CD4-positive, alpha-beta memory T cell (primary cell): ENCODE measurements at regions of chr2 and their contacts with region 1.

Region 1: DNA sequence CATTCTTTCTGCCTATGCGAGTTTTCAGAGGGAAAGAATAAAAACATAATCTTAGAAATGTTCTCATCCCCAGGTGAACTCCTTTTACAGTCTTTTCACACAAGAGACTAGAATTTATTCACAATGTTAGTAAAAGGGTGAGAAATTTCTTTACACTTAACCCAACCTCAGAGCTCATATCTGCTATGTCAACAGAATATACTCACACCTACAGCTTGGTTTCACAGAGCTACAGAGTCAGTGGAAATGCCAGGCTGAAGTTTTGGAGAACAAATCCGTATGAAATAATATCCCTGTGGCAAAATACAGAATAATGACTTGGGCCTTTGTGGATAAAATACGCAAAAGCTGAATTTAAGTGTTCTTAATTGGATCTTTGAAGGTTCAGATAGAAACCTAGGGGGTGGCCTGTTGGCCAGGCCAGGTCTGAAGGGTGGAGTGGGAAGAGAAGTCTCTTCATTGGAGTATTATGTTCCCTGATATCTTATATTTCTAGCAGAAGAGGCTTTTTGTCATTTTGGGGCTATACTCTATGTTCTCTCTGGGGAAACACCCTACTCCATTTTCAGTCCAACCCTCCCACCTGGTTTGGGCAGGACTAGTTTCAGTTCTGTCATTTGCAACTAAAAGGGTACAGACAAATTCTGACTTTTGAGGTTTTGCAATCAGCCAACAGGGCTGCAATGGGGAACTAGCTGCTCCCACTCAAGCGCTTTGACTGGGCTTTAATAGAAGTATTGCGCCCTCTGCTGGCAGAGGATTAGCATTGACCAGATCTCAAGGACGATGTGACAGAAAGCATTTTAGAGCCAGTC is 25.7 kb downstream of the FBXO48 start:
- DNase-seq: peak; percentile 78 to 87 (median 83)
- H3K4me3 ChIP-seq: no peak overlapping the region
- H3K4me3 Mint-ChIP-seq: peak overlapping the region in 5 of 8 donors; percentile 24 to 62 (median 37)
- H3K27ac ChIP-seq: peak overlapping the region; percentile 3
- H3K27ac Mint-ChIP-seq: peak overlapping the region; percentile 65 to 94 (median 89)
- H3K4me1 ChIP-seq: peaks cover 16% of the 10 kb centered on the region
- H3K4me1 Mint-ChIP-seq: peaks cover 8 to 24% (median 15%) of the 10 kb centered on the region in 4 donors
- H3K27me3 ChIP-seq: no peaks in the 10 kb centered on the region
- H3K27me3 Mint-ChIP-seq: no peaks in the 10 kb centered on the region

Region 2: GRCh38 chr2:68282811-68283418 is 158.5 kb before region 1 on chr2:
- CTCF ChIA-PET with region 1: interaction called, 6 read pairs
- POLR2A ChIA-PET with region 1: no interaction called
- intact Hi-C with region 1: loop called (anchors 2 kb)
- DNase-seq: peak; percentile 38 to 51 (median 46)
- H3K4me3 ChIP-seq: no peak overlapping the region
- H3K4me3 Mint-ChIP-seq: no peak overlapping the region
- H3K27ac ChIP-seq: no peak overlapping the region
- H3K27ac Mint-ChIP-seq: no peak overlapping the region
- H3K4me1 ChIP-seq: peaks cover 5% of the 10 kb centered on the region
- H3K4me1 Mint-ChIP-seq: peaks cover 0 to 8% (median 0%) of the 10 kb centered on the region in 4 donors
- H3K27me3 ChIP-seq: peaks cover 7% of the 10 kb centered on the region
- H3K27me3 Mint-ChIP-seq: peaks cover 4 to 12% of the 10 kb centered on the region in 2 donors

Region 3: DNA sequence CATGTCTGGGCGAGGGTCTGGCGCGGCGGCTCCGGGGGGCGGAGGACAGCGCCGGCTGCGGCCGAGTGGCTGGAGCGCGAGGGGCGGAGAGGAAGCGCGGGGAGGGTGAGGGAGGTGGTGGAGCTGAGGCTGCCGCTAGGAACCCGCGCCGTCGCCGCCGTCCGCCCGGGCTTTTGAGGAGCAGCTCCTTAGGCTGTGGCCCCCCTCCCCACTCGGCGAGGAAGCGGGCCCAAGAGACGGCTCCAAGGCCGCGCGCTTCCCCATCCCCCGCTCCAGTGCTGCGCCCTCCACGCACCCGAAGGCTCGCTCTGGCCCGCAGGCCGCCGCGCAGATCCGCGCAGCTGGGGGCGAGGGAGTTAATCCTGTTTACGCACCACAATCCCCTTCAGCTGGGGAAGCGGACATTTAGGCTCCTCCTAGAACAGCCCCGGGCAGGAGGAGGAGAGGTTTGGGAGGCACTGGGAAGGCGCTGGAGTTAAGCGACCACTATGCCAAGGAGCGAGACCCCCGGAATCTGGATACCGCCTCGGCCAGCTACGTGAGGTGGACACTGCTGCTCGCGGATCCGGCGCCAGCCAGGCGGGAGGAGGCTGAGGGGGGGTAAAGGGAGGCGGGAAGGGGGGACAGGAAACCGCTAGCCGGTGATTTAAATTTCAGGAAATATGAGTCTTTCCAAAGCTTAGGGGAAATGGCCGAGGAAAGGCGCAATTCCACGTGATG is 121.8 kb before region 1 on chr2 and contains the start of gene CNRIP1:
- CTCF ChIA-PET with region 1: no interaction called
- POLR2A ChIA-PET with region 1: no interaction called
- intact Hi-C with region 1: no loop called
- DNase-seq: no peak
- H3K4me3 ChIP-seq: peak within 1 kb of the TSS in 1 of 2 donors; percentile 14
- H3K4me3 Mint-ChIP-seq: peak within 1 kb of the TSS; percentile 70 to 89 (median 84)
- H3K27ac ChIP-seq: no peak within 1 kb of the TSS
- H3K27ac Mint-ChIP-seq: no peak within 1 kb of the TSS
- H3K4me1 ChIP-seq: peaks cover 14% of the 10 kb centered on the region
- H3K4me1 Mint-ChIP-seq: peaks cover 6 to 18% (median 13%) of the 10 kb centered on the region in 4 donors
- H3K27me3 ChIP-seq: peaks cover 16% of the 10 kb centered on the region
- H3K27me3 Mint-ChIP-seq: peaks cover 34 to 53% of the 10 kb centered on the region in 2 donors
- total RNA-seq, gene CNRIP1: 0.29 TPM in 1 of 2 experiments, not detected in the other

Region 4: GRCh38 chr2:68362069-68362468 is 79.3 kb before region 1 on chr2:
- CTCF ChIA-PET with region 1: interaction called, 78 read pairs
- POLR2A ChIA-PET with region 1: interaction called, 6 read pairs
- intact Hi-C with region 1: loop called (anchors 1 kb)
- DNase-seq: peak; percentile 74 to 82 (median 77)
- H3K4me3 ChIP-seq: peak overlapping the region in 1 of 2 donors; percentile 11
- H3K4me3 Mint-ChIP-seq: peak overlapping the region; percentile 63 to 88 (median 79)
- H3K27ac ChIP-seq: no peak overlapping the region
- H3K27ac Mint-ChIP-seq: peak overlapping the region; percentile 38 to 88 (median 83)
- H3K4me1 ChIP-seq: peaks cover 11% of the 10 kb centered on the region
- H3K4me1 Mint-ChIP-seq: peaks cover 5 to 42% (median 19%) of the 10 kb centered on the region in 4 donors
- H3K27me3 ChIP-seq: no peaks in the 10 kb centered on the region
- H3K27me3 Mint-ChIP-seq: no peaks in the 10 kb centered on the region

Region 5: GRCh38 chr2:68418855-68419254 is 22.5 kb before region 1 on chr2:
- CTCF ChIA-PET with region 1: interaction called, 16 read pairs
- POLR2A ChIA-PET with region 1: no interaction called
- intact Hi-C with region 1: no loop called
- DNase-seq: no peak
- H3K4me3 ChIP-seq: no peak overlapping the region
- H3K4me3 Mint-ChIP-seq: no peak overlapping the region
- H3K27ac ChIP-seq: no peak overlapping the region
- H3K27ac Mint-ChIP-seq: no peak overlapping the region
- H3K4me1 ChIP-seq: peaks cover 30% of the 10 kb centered on the region
- H3K4me1 Mint-ChIP-seq: peaks cover 3 to 42% (median 30%) of the 10 kb centered on the region in 4 donors
- H3K27me3 ChIP-seq: no peaks in the 10 kb centered on the region
- H3K27me3 Mint-ChIP-seq: no peaks in the 10 kb centered on the region

Region 6: DNA sequence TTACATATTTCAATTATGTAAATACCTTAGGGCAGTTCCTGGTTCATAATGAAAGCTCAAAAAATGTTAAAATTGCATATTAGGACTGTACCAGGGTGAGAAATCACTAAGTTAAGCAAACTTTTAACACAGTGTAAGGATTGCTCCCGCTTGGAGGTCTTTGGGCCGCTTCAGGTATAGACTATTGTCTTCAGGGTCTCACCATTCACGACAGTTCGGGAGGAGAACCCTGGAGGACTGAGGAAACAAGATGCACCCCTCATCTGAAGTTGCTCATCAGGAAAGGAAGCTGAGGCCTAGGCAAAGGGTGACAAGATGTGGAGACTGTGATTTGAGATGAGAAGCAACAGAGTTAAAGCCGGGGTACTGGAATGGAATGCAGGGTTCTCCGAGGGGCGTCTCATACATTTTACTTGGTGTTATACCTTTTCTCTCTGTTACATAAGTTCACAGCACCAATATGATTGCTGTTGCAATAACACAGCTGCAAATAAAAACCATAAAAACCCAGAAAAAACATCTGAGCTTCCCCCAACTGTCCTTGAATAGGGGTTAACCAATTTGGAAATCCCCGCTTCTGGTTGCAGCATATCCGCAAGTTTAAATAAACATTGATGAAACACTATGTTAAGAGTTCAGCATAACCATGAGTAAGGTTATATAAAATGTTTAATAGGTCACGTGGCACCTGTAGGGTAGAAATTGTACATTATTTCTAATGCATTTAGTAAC is 14.4 kb before region 1 on chr2:
- CTCF ChIA-PET with region 1: interaction called, 63 read pairs
- POLR2A ChIA-PET with region 1: interaction called, 5 read pairs
- intact Hi-C with region 1: no loop called
- DNase-seq: peak; percentile 61 to 76 (median 69)
- H3K4me3 ChIP-seq: no peak overlapping the region
- H3K4me3 Mint-ChIP-seq: peak overlapping the region in 7 of 8 donors; percentile 7 to 78 (median 61)
- H3K27ac ChIP-seq: peak overlapping the region; percentile 51
- H3K27ac Mint-ChIP-seq: peak overlapping the region; percentile 88 to 96 (median 95)
- H3K4me1 ChIP-seq: peaks cover 62% of the 10 kb centered on the region
- H3K4me1 Mint-ChIP-seq: peaks cover 0 to 23% (median 18%) of the 10 kb centered on the region in 4 donors
- H3K27me3 ChIP-seq: no peaks in the 10 kb centered on the region
- H3K27me3 Mint-ChIP-seq: no peaks in the 10 kb centered on the region